OCI-LY7 (cell line): ENCODE measurements at regions of chr15 and their contacts with region 1.

Region 1: DNA sequence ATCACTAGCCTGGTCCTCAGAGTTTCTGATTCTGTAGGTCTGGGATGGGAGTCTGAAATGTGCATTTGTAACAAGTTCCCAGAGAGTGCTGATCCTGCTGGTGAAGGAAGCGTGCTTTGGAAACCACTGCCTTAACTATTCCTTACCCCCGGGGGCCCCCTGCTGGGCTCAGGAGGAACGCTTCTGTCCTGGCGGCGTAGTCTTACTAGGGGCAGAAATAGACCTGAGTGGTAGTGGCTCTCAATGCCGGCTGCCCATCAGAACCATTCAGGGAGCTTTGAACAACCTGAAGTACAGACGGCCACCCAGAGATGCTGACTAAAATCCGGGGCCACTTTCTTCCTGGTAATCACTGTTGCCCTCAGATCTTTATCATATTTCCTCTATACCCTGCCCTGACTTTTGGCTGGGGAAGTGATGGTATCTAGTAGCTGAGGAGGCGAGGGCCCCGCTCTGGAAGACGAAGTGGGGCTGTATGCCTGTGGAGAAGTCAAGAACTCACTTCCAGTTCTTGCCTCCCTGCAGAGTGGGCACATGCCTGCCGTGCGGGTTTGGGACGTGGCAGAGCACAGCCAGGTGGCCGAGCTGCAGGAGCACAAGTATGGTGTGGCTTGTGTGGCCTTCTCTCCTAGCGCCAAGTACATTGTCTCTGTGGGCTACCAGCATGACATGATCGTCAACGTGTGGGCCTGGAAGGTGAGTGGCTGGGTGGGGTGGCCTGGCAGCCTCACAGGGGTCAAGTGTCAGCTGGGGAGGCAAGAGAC is 16.3 kb upstream of the JMJD7 start:
- DNase-seq: peak; percentile 82
- H3K4me3 ChIP-seq: no peak overlapping the region
- H3K27ac ChIP-seq: no peak overlapping the region
- H3K4me1 ChIP-seq: peaks cover 16% of the 10 kb centered on the region
- CTCF ChIP-seq: peak; percentile 97

Region 2: DNA sequence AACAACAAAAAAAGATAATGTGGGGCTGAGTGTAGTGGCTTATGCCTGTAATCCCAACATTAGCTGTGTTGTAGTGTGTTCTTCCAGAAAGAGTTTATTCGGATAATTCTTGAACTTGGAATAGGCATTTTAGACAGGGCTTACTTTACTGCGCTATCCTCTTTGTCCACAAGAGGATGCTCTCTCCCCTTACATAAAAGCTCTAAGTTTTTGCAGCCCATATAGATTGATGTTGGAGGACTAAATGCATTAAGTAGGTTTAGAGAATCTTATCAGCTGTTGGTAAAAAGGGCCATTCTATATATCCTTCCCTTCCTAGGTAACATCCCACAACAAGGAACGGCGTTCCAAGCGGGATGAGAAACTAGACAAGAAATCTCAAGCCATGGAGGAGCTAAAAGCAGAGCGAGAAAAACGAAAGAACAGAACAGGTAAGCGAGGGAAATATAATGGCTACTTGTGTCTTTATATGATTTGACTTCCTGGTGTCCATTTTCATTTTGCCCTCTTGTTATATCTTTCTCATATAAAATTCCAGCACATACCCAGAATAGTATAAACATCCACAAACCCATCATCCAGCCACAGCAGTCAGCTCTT is 345.7 kb before region 1 on chr15:
- CTCF ChIA-PET with region 1: no interaction called
- POLR2A ChIA-PET with region 1: no interaction called
- intact Hi-C with region 1: loop called (anchors 5 kb)
- DNase-seq: peak; percentile 54
- H3K4me3 ChIP-seq: no peak overlapping the region
- H3K27ac ChIP-seq: no peak overlapping the region
- H3K4me1 ChIP-seq: no peaks in the 10 kb centered on the region
- CTCF ChIP-seq: peak; percentile 99

Region 3: DNA sequence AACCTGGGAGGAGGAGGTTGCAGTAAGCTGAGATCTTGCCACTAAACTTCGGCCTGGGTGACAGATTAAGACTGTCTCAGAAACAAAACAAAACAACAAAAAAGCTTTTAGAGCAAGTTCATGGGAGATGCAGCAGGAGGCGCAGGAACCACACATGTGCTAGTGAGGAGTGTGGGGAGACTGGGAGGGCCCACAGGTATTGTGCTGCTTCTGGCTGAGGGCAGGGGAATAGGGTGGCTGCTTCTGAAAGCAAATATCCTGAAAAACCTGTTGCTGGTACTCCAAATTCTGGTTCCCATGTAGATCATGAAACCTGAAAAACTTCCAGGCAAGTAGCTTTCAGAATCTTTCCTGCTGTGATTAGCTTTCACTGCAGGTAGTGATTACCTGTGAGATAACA is 230.5 kb before region 1 on chr15:
- CTCF ChIA-PET with region 1: no interaction called
- POLR2A ChIA-PET with region 1: no interaction called
- intact Hi-C with region 1: loop called (anchors 5 kb)
- DNase-seq: peak; percentile 54
- H3K4me3 ChIP-seq: no peak overlapping the region
- H3K27ac ChIP-seq: no peak overlapping the region
- H3K4me1 ChIP-seq: no peaks in the 10 kb centered on the region
- CTCF ChIP-seq: peak; percentile 69

Region 4: GRCh38 chr15:41660235-41661077 is 151.2 kb before region 1 on chr15 and contains the start of gene MGA:
- CTCF ChIA-PET with region 1: no interaction called
- POLR2A ChIA-PET with region 1: no interaction called
- intact Hi-C with region 1: loop called (anchors 2 kb)
- DNase-seq: peak; percentile 98
- H3K4me3 ChIP-seq: peak within 1 kb of the TSS; percentile 78
- H3K27ac ChIP-seq: peak within 1 kb of the TSS; percentile 95
- H3K4me1 ChIP-seq: peaks cover 44% of the 10 kb centered on the region
- CTCF ChIP-seq: no peak
- total RNA-seq, gene MGA: 48.8 and 60.1 TPM in 2 replicates

Region 5: DNA sequence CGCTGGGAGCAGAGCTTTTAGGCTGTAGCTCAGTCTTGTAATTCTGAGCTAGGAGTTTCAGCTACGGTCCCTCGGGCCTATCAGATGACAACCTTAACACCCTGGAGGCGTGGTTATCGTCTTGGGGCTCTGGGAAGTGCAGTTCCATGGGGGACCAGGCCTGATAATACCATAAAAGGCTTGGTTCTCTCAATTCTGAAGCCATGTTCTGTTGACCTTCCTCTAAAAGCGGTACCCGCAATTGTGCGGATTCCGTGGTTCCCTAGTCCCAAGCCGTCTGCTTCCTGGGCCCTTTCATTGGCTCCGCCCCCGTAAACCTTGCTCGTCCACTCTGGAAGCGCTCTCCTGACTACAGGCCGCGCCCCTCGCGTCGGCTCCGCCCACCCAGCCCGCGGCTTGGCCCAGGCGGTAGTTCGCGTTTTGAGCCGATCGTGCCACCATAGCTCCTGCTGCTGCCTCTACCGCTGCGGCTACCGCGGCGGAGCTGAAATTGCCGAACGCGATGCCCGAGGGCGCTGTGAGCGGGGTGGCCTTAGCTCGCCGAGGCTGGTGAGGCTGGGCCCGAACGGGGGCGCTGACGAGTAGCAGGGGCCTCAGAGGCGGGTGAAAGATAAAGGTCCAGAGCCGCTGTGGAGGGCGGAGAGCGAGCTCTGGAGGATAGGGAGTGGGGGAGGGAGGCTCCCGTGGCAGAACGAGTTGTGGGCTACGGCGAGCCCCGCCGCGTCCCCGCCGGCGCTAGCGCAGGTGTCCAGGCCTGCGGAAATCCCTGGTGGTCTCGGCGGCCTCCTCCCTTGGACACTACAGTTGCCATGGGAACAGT is 37.3 kb before region 1 on chr15 and contains the start of gene MAPKBP1:
- CTCF ChIA-PET with region 1: interaction called, 67 read pairs
- POLR2A ChIA-PET with region 1: interaction called, 22 read pairs
- intact Hi-C with region 1: loop called (anchors 1 kb)
- DNase-seq: peak; percentile 98
- H3K4me3 ChIP-seq: peak within 1 kb of the TSS; percentile 78
- H3K27ac ChIP-seq: peak within 1 kb of the TSS; percentile 79
- H3K4me1 ChIP-seq: peaks cover 53% of the 10 kb centered on the region
- CTCF ChIP-seq: peak; percentile 85
- total RNA-seq, gene MAPKBP1: 13.4 and 14.5 TPM in 2 replicates

Region 6: DNA sequence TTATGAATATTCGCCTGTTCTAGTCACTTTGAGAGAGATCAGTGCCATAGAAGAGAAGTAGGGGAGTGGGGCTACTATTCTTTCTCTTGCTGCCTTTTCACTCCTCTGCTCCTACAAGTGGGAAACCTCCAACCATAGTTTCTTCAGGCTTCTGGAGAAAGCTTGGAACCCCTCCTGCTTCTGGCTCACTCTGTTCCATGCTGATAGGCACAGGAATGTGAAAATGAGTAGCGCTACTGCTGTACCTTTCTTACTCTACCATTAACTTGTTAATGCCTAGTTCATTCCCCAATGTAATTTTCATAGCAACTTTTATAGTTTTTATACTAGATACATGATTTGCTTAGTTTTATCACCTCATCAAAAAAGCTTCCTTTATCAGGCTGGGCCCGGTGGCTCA is 10.4 kb before region 1 on chr15:
- CTCF ChIA-PET with region 1: no interaction called
- POLR2A ChIA-PET with region 1: no interaction called
- intact Hi-C with region 1: no loop called
- DNase-seq: no peak
- H3K4me3 ChIP-seq: no peak overlapping the region
- H3K27ac ChIP-seq: no peak overlapping the region
- H3K4me1 ChIP-seq: peaks cover 11% of the 10 kb centered on the region
- CTCF ChIP-seq: no peak